Panc1 (cell line): ENCODE measurements at regions of chr2 and their contacts with region 1.

Region 1: DNA sequence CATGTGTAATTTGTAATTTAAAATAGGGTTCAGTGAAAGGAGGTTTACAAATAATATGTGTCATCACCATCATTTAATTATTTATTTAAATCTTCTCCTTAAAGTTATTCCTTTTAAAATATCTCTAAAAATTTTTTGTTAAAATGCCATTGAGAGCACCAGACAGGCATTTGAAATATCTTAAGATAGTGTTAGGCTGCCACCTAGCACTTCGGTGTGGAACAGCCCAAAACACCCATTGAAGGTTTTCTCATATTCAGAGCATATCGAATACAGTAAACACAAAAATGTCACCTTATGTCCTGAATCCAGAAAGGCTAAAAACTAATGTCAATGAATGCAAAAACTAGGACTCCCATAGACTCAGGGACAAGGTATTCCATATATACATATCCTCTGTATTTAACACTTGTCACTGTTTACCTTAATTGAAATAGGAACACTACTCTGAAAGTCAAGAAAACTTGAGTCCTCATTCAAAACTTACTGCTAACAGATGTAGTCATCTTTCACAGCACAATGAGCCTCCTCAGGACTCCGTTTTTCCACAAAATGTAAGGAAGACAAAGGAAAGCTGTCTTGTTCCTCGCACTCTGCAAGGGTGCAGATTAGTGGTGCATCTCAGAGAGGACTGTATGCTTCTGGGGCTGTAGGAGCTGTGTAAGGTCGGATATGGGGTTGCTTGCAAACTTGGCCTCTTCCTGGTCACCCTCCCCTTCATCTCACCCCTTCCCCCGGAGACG is 329.5 kb downstream of the PAX3 start:
- DNase-seq: peak; percentile 5
- ATAC-seq: peak; percentile 82; the same call in 1 of the 2 replicates
- H3K4me3 ChIP-seq: no peak overlapping the region
- H3K27ac ChIP-seq: no peak overlapping the region
- H3K4me1 ChIP-seq: no peaks in the 10 kb centered on the region
- H3K27me3 ChIP-seq: no peaks in the 10 kb centered on the region; the same call in 1 of the 2 replicates
- CTCF ChIP-seq: peak; percentile 74; the same call in 1 of the 2 replicates

Region 2: DNA sequence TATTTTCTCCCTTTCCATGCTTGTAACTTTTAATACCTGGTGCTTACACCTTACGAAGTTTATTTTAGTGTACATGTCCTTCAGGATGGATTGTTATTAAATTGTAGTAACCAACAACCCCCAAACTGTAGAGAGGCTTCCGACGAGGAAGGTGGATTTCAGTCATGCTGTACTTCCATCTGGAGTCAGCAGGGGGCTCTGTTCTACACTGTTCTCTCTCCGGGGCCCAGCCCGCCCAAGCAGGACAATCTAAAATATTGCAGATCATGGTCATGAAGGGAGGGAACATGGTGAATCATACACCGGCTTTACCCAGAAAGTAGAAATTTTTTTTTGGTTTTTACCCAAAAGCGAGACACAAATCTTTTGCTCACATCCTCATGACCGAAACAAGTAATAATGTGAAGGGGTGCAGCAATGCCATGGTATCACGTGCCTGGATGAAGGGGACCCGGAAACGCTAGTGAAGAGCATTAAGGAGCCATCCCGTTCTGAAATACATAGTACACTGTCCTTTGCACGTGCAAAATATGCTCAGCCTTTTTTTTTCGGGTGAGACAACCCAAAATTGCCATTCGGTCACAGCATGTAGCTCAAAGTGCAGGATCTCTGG is 1281.9 kb before region 1 on chr2:
- CTCF ChIA-PET with region 1: no interaction called
- POLR2A ChIA-PET with region 1: no interaction called
- in situ Hi-C with region 1: no loop called
- intact Hi-C with region 1: loop called (anchors 10 kb)
- DNase-seq: peak; percentile 20
- ATAC-seq: peak; percentile 79
- H3K4me3 ChIP-seq: no peak overlapping the region
- H3K27ac ChIP-seq: no peak overlapping the region
- H3K4me1 ChIP-seq: no peaks in the 10 kb centered on the region
- H3K27me3 ChIP-seq: no peaks in the 10 kb centered on the region
- CTCF ChIP-seq: peak; percentile 80